ENCODE measurements at regions of chr4 and their contacts with region 1.

Region 1: DNA sequence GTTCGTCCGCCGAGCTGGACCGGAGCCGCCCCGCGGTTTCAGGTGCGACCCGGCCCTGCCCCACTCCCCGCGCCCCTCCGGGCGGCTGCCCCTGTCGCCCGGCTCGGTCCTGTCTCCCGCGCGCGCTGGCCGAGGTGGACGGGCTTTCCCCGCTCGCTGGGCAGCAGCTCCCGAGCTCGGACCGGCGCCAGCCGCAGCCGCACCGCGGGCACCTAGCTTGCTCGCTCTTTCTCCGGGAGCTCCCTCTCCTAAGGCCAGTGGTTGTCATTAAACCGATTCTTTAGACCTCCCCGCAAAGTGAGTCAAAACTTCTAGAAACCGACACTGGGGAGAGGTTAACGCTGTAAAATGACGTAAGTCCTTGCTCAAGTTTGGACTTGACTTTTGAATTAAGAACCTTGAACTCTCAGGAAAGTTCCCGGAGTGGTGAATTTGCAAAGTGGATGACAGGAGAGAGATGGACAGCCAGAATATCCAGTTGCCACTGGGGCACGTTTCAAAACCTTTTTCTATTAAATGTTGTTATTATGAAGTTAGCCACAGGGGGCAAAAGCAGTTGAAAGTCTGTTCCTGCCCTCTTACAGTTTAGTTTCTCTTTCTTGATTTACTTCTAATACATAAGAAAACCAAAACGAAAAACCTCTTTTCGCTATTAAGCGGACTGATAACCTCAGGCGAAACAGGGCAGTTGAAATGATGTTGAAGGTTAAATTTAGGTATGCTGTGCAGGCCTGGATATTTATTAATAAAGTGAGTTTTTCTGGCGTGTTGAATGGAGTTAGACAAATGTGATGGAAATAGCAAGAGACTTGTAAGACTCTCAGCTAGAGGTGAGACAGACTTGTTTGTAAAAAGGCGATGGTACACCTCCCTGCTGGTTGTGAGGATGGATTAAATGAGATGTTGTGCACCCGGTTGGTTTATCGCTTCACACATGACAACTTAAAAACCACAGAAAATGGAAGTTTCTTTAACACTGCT is 847 bp downstream of the PI4K2B start:
- DNase-seq: peak; percentile 46 to 72
- H3K4me3 ChIP-seq: peak overlapping the region; percentile 78
- H3K27ac ChIP-seq: peak overlapping the region; percentile 26
- H3K4me1 ChIP-seq: peaks cover 6% of the 10 kb centered on the region
- H3K27me3 ChIP-seq: no peaks in the 10 kb centered on the region
- CTCF ChIP-seq: peak; percentile 69

Region 2: DNA sequence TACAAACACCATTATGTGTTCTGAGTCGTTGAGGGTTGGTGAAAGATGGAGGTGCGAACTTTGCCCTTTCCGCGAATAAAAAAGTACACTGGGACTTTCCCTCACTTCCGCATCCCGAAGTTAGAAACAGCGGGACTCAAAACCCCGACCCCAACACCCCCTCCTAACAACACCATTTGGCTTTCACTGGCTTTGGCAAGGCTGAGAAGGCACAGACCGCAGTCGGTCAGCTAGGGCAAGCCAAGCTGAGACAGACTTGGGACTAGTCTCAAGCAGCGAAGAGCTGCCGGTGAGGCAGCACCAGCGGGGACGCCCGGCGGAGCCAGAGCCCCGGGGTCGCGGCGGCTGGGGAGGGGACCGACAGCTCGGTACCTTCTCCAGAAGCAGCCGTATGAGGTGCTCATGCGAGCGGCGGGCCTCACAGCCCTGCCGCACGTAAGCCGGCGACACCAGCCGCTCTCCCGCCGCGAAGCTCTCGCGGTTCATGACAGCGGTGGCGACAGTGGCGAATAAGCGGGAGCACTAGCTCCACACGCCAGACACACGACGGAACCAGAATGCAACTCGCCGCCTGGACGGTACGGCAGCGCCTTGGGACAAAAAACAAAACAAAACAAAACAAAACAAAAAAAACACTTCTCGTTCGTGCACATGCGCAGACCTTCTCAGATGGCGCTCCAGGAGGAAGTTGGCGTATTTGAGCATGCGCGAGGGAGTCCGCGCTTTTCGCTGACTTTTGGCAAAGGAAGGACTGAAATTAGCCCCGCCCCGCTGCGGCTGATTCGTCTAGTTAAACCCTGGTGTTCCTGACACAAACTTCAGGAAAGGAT is 74.6 kb before region 1 on chr4 and contains the start of gene SEPSECS:
- CTCF ChIA-PET with region 1: interaction called, 11 read pairs
- POLR2A ChIA-PET with region 1: interaction called, 9 read pairs
- intact Hi-C with region 1: loop called (anchors 1 kb)
- DNase-seq: peak; percentile 93 to 95
- H3K4me3 ChIP-seq: peak within 1 kb of the TSS; percentile 74
- H3K27ac ChIP-seq: peak within 1 kb of the TSS; percentile 72
- H3K4me1 ChIP-seq: peaks cover 26% of the 10 kb centered on the region
- H3K27me3 ChIP-seq: no peaks in the 10 kb centered on the region
- CTCF ChIP-seq: no peak
- total RNA-seq, gene SEPSECS: 9.1 and 11.3 TPM in 2 replicates

Region 3: DNA sequence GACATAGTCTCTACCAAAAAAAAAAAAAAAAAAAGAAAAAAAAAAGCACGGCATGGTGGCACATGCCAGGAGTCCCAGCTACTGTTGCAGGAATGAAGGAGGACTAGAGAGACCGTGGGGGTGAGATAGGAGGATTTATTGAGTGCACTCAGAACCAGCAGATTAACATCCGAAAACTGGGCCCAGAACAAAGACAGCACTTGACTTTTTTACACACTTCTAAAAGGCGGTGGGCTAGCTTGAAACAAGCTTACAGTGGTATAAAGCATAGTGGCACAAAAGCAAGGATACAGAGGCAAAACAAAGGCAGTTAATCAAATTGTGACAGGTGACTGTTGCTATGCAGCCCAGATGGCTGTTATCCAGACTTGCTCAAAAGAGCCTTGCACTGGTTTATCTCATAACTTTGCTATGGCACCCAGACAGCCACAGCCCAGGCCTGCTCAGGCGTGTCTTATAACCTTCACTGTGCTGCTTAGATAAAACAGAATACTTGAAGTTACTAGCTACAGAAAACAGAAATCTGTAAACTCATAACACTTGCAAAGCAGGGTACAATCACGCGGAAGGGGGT is 10.8 kb before region 1 on chr4:
- CTCF ChIA-PET with region 1: interaction called, 13 read pairs
- POLR2A ChIA-PET with region 1: no interaction called
- intact Hi-C with region 1: no loop called
- DNase-seq: peak in 1 of 2 experiments; percentile 6
- H3K4me3 ChIP-seq: no peak overlapping the region
- H3K27ac ChIP-seq: no peak overlapping the region
- H3K4me1 ChIP-seq: no peaks in the 10 kb centered on the region
- H3K27me3 ChIP-seq: no peaks in the 10 kb centered on the region
- CTCF ChIP-seq: no peak

Region 4: GRCh38 chr4:25367004-25367621 is 132.4 kb after region 1 on chr4:
- CTCF ChIA-PET with region 1: no interaction called
- POLR2A ChIA-PET with region 1: no interaction called
- intact Hi-C with region 1: loop called (anchors 5 kb)
- DNase-seq: no peak
- H3K4me3 ChIP-seq: no peak overlapping the region
- H3K27ac ChIP-seq: no peak overlapping the region
- H3K4me1 ChIP-seq: no peaks in the 10 kb centered on the region
- H3K27me3 ChIP-seq: no peaks in the 10 kb centered on the region
- CTCF ChIP-seq: peak; percentile 77